Caco-2 (cell line): ENCODE measurements at regions of chr9 and their contacts with region 1.

Region 1: GRCh38 chr9:133459476-133460404 is at the start of gene CACFD1:
- DNase-seq: peak; percentile 97 to 99
- H3K4me3 ChIP-seq: peak within 1 kb of the TSS; percentile 70
- H3K4me3 Mint-ChIP-seq: peak within 1 kb of the TSS; percentile 78
- H3K27ac Mint-ChIP-seq: peak within 1 kb of the TSS; percentile 77
- H3K4me1 ChIP-seq: peaks cover 12% of the 10 kb centered on the region
- H3K4me1 Mint-ChIP-seq: no peaks in the 10 kb centered on the region
- H3K27me3 ChIP-seq: no peaks in the 10 kb centered on the region
- H3K27me3 Mint-ChIP-seq: no peaks in the 10 kb centered on the region
- CTCF ChIP-seq: no peak
- total RNA-seq, gene CACFD1: 26.0 and 27.0 TPM in 2 replicates

Region 2: DNA sequence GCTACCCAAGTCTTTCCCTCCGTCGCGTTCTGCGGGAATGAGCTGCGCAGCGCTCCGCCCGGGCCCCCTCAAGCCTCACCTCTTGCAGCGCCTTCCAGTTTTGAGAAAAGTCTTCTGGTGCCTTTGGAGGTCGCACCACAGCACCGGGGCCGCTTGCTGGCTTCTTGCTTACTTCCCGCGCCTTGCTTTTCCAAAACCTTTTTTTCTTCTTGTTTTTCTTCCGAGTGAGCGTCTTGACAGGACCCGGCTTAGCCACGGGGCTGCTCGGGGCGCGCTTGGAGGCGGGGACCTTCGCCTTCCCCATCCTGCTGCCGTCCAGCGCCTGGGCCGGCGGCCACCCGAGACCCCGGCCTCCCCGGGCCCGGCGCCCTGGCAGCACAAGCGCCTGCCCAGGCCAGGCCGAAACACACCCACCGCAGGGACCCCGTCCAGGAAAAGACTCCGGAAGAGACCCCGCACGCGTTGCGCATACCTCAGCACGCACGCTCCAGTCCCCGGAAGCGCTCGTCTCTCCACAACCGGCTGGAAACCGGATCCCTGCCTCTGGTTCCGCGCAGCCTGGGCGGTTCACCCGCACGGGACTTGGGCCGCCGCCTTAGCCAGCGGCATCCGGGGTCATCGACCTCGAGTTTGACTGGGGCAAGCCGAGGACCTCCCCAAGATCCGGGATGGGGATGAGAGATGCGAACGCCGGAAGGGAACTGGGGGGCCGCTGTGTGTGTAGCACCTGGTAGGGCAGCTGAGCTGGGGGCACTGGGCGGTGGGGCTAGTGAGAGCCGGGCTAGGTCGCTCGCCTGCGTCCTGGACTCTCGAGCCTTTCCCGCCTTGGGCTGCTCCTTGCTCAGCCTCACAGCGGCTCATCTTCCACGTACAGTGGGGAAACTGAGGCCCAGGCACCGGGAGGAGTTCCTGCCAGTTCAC is 41.9 kb before region 1 on chr9 and contains the start of gene REXO4:
- CTCF ChIA-PET with region 1: interaction called, 5 read pairs
- POLR2A ChIA-PET with region 1: interaction called, 28 read pairs
- intact Hi-C with region 1: loop called (anchors 5 kb)
- DNase-seq: peak; percentile 93 to 95
- H3K4me3 ChIP-seq: peak within 1 kb of the TSS; percentile 65
- H3K4me3 Mint-ChIP-seq: peak within 1 kb of the TSS; percentile 86
- H3K27ac Mint-ChIP-seq: peak within 1 kb of the TSS; percentile 84
- H3K4me1 ChIP-seq: peaks cover 12% of the 10 kb centered on the region
- H3K4me1 Mint-ChIP-seq: peaks cover 11% of the 10 kb centered on the region
- H3K27me3 ChIP-seq: no peaks in the 10 kb centered on the region
- H3K27me3 Mint-ChIP-seq: no peaks in the 10 kb centered on the region
- CTCF ChIP-seq: no peak
- total RNA-seq, gene REXO4: 43.6 and 44.1 TPM in 2 replicates

Region 3: DNA sequence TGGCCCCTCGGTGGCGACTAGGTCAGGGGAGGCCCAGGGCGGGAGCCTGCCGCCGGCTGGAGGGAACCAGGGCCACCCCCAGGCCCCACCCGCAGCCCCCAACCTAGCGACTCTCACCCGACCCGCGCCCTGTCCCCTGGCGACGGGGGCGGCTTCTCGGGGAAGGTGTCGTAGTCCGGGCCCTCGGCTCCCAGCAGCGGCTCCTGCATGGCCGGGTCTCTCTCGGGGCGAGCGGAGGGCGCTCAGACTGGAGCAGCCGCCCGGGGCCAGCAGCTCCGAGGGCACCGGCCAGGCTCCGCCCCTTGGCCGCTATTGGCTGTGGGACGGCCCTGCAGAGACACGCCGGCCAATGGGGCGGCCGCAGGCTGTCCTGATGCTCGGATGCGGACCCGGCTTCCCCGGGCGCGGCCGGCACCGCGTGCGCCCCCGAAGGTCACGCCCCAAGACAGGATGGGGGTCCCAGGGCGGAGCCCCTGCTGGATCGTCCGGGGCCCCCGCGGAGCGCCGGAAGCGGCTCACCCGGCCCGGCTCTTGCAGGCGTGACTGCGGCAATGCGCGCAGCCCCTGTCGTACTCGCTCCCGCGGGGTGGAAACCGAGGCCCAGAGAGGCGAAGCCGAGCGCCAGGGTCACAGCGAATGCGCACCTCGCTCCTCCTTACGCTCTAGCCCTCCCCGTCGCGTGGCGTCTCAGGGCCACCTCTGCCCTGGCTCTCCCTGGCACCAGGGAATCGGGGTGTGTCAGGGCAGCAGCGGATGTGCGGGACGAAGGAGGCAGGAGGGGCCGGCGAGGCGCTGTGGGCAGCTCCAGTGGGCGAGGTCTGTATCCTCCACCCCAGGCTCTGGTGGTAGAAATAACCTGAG is 19.3 kb after region 1 on chr9 and contains the start of gene SLC2A6:
- CTCF ChIA-PET with region 1: interaction called, 12 read pairs
- POLR2A ChIA-PET with region 1: interaction called, 17 read pairs
- intact Hi-C with region 1: loop called (anchors 1 kb)
- DNase-seq: peak; percentile 83 to 90
- H3K4me3 ChIP-seq: peak within 1 kb of the TSS; percentile 43
- H3K4me3 Mint-ChIP-seq: peak within 1 kb of the TSS; percentile 66
- H3K27ac Mint-ChIP-seq: no peak within 1 kb of the TSS
- H3K4me1 ChIP-seq: 0 out of 2 replicates have a peak, but pooled peaks cover 7% of the 10 kb centered on the region
- H3K4me1 Mint-ChIP-seq: peaks cover 7% of the 10 kb centered on the region
- H3K27me3 ChIP-seq: no peaks in the 10 kb centered on the region
- H3K27me3 Mint-ChIP-seq: peaks cover 3% of the 10 kb centered on the region
- CTCF ChIP-seq: no peak
- total RNA-seq, gene SLC2A6: 7.1 and 8.4 TPM in 2 replicates

Region 4: GRCh38 chr9:133499132-133499891 is 39.6 kb after region 1 on chr9:
- CTCF ChIA-PET with region 1: interaction called, 12 read pairs
- POLR2A ChIA-PET with region 1: interaction called, 8 read pairs
- intact Hi-C with region 1: no loop called
- DNase-seq: peak; percentile 57 to 64
- H3K4me3 ChIP-seq: no peak overlapping the region
- H3K4me3 Mint-ChIP-seq: no peak overlapping the region
- H3K27ac Mint-ChIP-seq: peak overlapping the region; percentile 37
- H3K4me1 ChIP-seq: peaks cover 16% of the 10 kb centered on the region
- H3K4me1 Mint-ChIP-seq: no peaks in the 10 kb centered on the region
- H3K27me3 ChIP-seq: no peaks in the 10 kb centered on the region
- H3K27me3 Mint-ChIP-seq: no peaks in the 10 kb centered on the region
- CTCF ChIP-seq: no peak